PC-3 (cell line): ENCODE measurements at regions of chr14 and their contacts with region 1.

Region 1: DNA sequence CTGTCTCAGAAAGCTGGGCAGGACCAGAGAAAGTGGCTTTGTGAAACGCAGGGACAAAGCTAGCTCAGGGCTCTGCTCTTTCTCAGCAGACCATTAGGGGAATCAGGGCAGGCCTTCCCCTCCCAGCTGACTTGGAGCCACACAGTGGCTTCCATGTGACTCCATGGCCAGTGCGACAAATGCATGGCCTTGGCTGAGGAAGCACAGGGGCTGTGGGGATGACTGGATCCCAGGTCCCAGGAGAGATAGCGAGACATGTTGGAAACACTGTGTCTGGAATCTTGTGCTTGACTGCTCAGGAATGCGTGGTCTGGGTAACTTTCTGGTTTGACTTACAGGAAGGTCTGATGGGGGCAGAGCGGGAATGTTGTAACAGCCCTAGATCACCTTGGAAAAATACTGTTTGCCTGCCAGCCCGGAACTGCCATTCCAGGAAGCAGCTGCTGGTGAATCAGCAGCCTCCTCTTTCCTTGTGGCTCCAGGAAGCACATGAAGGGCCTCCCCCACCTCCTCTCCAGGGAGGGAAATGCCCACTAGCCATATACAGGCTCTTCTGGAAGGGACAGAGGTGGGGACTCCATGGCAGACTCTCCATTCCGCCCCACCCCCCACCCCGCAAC is 133.5 kb upstream of the HIF1A start:
- DNase-seq: peak; percentile 99
- ATAC-seq: peak; percentile 39
- H3K4me3 ChIP-seq: peak overlapping the region; percentile 19; the same call in 1 of the 2 replicates
- H3K27ac ChIP-seq: peak overlapping the region; percentile 96
- H3K4me1 ChIP-seq: peaks cover 90% of the 10 kb centered on the region
- H3K27me3 ChIP-seq: no peaks in the 10 kb centered on the region
- CTCF ChIP-seq: peak; percentile 25; the same call in 1 of the 2 replicates

Region 2: DNA sequence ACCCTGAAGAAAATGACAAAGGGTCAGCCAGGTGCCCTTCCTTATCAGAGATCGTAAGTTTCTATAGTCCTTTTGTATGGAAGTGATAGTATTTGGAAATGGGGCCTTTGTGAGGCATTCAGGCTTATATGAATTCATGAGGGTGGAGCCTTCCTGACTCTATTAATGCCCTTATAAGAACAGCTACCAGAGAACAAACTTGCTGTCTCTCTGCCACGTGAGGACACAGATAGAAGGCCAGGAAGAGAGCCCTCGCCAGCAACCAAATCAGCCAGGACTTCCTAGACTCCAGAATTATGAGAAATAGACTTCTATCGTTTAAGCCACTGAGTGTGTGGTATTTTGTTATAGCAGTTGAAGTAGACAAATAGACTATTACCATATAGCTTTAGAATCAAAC is 617.6 kb before region 1 on chr14:
- CTCF ChIA-PET with region 1: no interaction called
- POLR2A ChIA-PET with region 1: no interaction called
- intact Hi-C with region 1: no loop called
- DNase-seq: no peak
- ATAC-seq: no peak
- H3K4me3 ChIP-seq: no peak overlapping the region
- H3K27ac ChIP-seq: no peak overlapping the region
- H3K4me1 ChIP-seq: no peaks in the 10 kb centered on the region
- H3K27me3 ChIP-seq: no peaks in the 10 kb centered on the region
- CTCF ChIP-seq: no peak

Region 3: DNA sequence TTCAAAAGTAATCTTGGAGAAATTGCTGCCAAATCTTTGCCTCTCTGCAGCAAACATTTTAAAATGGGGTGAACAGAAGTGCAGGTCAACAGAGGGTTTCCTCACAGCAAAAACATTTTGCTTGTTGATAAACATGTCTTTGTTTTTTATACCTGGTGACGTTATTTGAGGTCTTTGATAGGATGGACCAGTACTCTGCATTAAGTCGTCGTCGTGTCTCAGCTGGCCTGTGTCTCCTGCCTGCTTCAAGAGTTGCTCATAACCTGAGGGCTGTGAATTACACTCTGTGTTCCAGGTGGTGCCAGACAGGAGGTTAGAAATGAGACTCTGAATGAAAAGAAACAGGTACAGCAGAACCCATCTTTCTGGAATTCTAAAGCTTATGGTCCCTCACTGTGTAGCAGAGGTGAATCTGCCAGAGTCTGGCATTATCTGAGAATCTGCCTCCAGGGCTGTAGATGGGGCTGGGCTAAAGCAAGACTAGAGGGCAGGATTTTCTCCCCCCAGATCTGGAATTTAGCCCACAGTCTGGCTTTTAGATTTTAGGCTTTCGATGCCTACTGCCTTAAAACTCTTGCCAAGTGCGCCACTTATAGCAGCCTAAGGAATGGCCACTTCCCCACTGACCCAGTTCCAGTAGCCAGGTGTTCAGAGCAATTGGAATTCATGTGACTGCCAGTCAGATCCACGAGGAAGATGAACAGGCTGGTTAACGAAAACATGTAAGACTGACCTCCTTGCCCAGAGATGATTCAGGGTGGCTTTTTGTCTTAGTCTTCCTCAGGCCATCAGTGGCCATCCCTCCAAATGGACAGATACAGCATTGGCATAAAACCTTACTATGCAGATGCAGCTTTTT is 79.2 kb before region 1 on chr14:
- CTCF ChIA-PET with region 1: interaction called, 12 read pairs
- POLR2A ChIA-PET with region 1: no interaction called
- intact Hi-C with region 1: no loop called
- DNase-seq: no peak
- ATAC-seq: no peak
- H3K4me3 ChIP-seq: no peak overlapping the region
- H3K27ac ChIP-seq: no peak overlapping the region
- H3K4me1 ChIP-seq: peaks cover 47% of the 10 kb centered on the region
- H3K27me3 ChIP-seq: no peaks in the 10 kb centered on the region
- CTCF ChIP-seq: no peak

Region 4: GRCh38 chr14:61585598-61586543 is 24.1 kb after region 1 on chr14:
- CTCF ChIA-PET with region 1: interaction called, 9 read pairs
- POLR2A ChIA-PET with region 1: interaction called, 11 read pairs
- intact Hi-C with region 1: loop called (anchors 1 kb)
- DNase-seq: peak; percentile 79
- ATAC-seq: peak; percentile 62
- H3K4me3 ChIP-seq: peak overlapping the region; percentile 9; the same call in 1 of the 2 replicates
- H3K27ac ChIP-seq: peak overlapping the region; percentile 93
- H3K4me1 ChIP-seq: peaks cover 34% of the 10 kb centered on the region
- H3K27me3 ChIP-seq: no peaks in the 10 kb centered on the region
- CTCF ChIP-seq: no peak

Region 5: GRCh38 chr14:61644834-61645233 is 83.1 kb after region 1 on chr14:
- CTCF ChIA-PET with region 1: interaction called, 8 read pairs
- POLR2A ChIA-PET with region 1: interaction called, 4 read pairs
- intact Hi-C with region 1: loop called (anchors 1 kb)
- DNase-seq: peak; percentile 53
- ATAC-seq: peak; percentile 34
- H3K4me3 ChIP-seq: no peak overlapping the region
- H3K27ac ChIP-seq: no peak overlapping the region
- H3K4me1 ChIP-seq: peaks cover 53% of the 10 kb centered on the region
- H3K27me3 ChIP-seq: no peaks in the 10 kb centered on the region
- CTCF ChIP-seq: no peak

Region 6: DNA sequence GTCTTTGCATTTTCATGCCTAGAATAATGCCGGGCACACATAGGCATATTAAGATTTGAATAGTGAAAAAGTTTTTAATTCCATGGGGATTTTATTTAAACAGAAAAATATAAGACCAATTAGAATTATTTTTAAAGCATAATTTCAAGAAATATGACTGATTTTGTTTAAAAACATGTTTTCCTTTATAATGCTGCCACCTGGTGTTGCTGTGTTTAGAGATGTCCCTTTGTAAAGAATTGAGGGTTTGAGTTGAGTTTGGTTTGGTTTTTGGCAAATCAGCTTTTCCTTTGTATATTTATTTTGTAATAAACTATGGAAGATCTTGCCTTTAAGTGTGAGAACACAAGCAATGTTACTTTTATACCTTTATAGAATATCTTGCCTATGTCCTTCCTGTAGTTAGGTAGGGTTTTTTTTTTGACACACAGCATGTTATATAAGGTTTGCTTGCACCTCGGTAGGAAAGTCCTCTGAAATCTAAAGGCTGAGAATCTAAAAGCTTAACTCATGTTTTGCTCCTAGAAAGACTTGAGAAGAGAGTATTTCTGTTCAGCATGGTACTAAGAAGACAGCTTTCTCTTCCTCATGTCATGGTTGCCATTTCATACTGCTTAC is 169.1 kb after region 1 on chr14:
- CTCF ChIA-PET with region 1: interaction called, 3 read pairs
- POLR2A ChIA-PET with region 1: interaction called, 7 read pairs
- intact Hi-C with region 1: loop called (anchors 1 kb)
- DNase-seq: peak; percentile 68
- ATAC-seq: no peak
- H3K4me3 ChIP-seq: no peak overlapping the region
- H3K27ac ChIP-seq: peak overlapping the region; percentile 19
- H3K4me1 ChIP-seq: peaks cover 17% of the 10 kb centered on the region
- H3K27me3 ChIP-seq: no peaks in the 10 kb centered on the region
- CTCF ChIP-seq: peak; percentile 83

Region 7: DNA sequence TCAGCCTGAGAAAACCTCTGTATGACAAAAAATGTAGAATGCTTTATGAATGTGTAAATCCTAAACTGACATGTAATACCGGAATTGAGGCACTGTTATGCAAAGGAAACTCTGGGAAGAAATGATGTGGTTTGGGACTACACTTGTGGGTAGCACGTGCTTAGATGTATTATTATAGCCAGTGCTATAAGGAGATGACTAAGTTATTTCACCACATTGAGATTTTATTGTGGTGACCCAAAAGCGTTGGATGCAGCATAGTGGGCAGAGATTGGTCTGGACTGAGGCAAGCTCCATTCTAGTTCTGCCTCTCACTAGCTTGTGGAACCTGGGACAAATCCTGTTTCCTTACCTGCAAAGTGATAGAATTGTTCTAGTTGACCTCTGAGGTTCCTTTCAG is 372.6 kb after region 1 on chr14:
- CTCF ChIA-PET with region 1: no interaction called
- POLR2A ChIA-PET with region 1: interaction called, 10 read pairs
- intact Hi-C with region 1: no loop called
- DNase-seq: peak; percentile 98
- ATAC-seq: peak; percentile 92
- H3K4me3 ChIP-seq: no peak overlapping the region
- H3K27ac ChIP-seq: peak overlapping the region; percentile 93
- H3K4me1 ChIP-seq: peaks cover 52% of the 10 kb centered on the region
- H3K27me3 ChIP-seq: no peaks in the 10 kb centered on the region
- CTCF ChIP-seq: no peak